HepG2 (cell line): ENCODE measurements at regions of chr14 and their contacts with region 1.

Region 1: DNA sequence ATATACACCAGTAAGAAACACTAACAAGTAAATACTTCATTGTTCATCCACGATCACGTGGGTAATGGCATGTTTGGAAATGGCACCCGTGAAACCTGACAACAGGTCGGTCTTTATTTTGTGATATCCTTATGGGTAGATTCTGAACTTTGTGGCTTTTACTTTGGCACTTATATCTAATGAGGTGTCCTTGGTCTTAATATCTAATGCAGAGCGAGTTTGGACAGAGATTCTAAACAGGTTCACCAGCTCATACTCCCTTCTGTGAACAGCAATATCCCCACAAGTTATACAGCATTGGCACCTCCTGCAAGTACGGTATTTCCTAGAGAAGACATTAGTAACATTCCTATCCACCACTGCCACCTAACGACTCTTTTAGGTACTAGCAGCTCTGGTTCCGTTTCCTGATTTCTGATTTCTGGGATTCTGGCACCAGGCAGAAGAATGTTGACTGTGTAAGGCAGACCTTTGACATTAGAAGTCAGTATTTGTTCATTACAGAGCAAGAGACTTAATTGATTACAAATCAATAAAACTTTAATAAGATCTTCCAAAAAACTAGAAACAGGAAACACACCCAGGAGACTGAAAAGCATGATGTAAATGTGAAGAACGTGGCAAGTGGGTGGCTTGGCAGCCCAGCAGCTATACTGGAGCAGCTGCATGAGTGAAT is 2.4 kb downstream of the ANG start:
- DNase-seq: peak; percentile 84
- ATAC-seq: peak; percentile 52
- H3K4me3 ChIP-seq: peak overlapping the region in 2 of 3 experiments; percentile 2 to 32; a peak in 1 of 6 replicates
- H3K27ac ChIP-seq: peak overlapping the region; percentile 37
- H3K4me1 ChIP-seq: peaks cover 45% of the 10 kb centered on the region
- H3K27me3 ChIP-seq: no peaks in the 10 kb centered on the region; a peak in 1 of 5 replicates
- CTCF ChIP-seq: peak; percentile 93
- EP300 ChIP-seq: no peak
- POLR2A ChIP-seq: peak in 1 of 2 experiments; percentile 25; a peak in 1 of 4 replicates
- RAD21 ChIP-seq: peak; percentile 88

Region 2: DNA sequence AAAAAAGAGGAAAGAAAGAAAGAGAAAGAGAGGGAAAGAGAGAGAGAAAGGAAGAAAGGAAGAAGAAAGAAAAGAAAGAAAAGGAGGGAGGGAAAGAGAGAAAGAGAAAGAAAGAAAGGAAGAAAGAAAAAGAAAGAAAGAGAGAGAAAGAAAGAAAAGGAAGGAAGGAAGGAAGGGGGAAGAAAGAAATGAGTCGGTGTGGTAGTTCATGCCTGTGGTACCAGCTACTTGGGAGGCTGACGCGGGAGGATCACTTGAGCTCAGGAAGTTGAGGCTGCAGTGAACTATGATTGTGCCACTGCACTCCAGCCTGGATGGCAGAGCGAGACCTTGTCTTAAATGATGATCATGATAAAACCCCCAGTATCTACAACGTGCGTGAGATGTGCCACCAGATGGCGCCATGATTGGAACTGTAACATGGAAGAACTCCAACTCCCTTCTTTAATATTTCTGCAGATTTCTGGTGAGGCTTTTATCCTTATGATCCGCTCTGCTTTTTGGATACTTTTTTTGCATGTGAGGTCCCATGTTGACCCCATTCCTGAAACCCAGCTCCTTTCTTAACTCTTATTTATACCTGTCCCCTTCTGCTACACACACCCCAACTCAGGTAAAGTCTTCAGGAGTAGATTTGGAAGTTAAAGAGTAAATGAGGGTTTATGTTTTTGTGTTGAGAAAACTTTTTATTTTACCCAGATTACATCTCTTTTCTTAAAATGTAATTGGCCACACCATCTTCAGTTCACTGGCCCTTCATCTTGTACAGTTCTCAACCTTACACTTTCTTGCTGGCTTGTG is 160.0 kb before region 1 on chr14:
- CTCF ChIA-PET with region 1: no interaction called
- POLR2A ChIA-PET with region 1: no interaction called
- in situ Hi-C with region 1: no loop called
- intact Hi-C with region 1: loop called (anchors 2 kb)
- DNase-seq: peak; percentile 75
- ATAC-seq: peak; percentile 94
- H3K4me3 ChIP-seq: no peak overlapping the region
- H3K27ac ChIP-seq: no peak overlapping the region
- H3K4me1 ChIP-seq: peaks cover 9% of the 10 kb centered on the region; the same call in 1 of the 2 replicates
- H3K27me3 ChIP-seq: no peaks in the 10 kb centered on the region; a peak in 2 of 5 replicates
- CTCF ChIP-seq: peak; percentile 83
- EP300 ChIP-seq: no peak
- POLR2A ChIP-seq: no peak
- RAD21 ChIP-seq: peak; percentile 54; the same call in 1 of the 2 replicates

Region 3: GRCh38 chr14:20632682-20633428 is 58.1 kb before region 1 on chr14:
- CTCF ChIA-PET with region 1: no interaction called
- POLR2A ChIA-PET with region 1: interaction called, 99 read pairs
- in situ Hi-C with region 1: no loop called
- intact Hi-C with region 1: loop called (anchors 1 kb)
- DNase-seq: peak; percentile 93
- ATAC-seq: peak; percentile 79
- H3K4me3 ChIP-seq: peak overlapping the region; percentile 69 to 78 (median 77)
- H3K27ac ChIP-seq: peak overlapping the region; percentile 16
- H3K4me1 ChIP-seq: peaks cover 34% of the 10 kb centered on the region
- H3K27me3 ChIP-seq: no peaks in the 10 kb centered on the region; a peak in 1 of 5 replicates
- CTCF ChIP-seq: no peak
- EP300 ChIP-seq: 0 out of 4 replicates have a peak, but pooled peaks of 1 of the 2 experiments have one; percentile 9
- POLR2A ChIP-seq: no peak
- RAD21 ChIP-seq: no peak

Region 4: DNA sequence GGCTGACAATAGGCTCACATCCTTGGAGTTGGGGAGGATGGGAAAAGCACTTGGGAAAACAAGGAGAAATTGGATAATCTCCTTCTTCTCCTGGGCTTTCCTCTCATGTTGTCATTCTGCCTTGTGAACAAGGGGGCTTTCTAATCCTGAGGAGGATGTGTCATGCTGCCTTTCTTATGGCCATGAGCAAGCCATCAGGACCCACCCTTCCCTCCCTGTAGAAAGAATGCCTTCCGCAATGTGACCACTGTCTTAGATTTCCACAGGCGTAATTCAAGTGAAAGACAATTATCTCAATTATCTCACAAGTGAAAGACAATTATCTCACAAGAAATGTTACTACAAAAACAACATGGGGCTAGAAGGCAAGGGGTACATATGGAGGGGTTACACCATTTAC is 46.5 kb before region 1 on chr14:
- CTCF ChIA-PET with region 1: no interaction called
- POLR2A ChIA-PET with region 1: no interaction called
- in situ Hi-C with region 1: no loop called
- intact Hi-C with region 1: no loop called
- DNase-seq: no peak
- ATAC-seq: no peak
- H3K4me3 ChIP-seq: no peak overlapping the region
- H3K27ac ChIP-seq: no peak overlapping the region
- H3K4me1 ChIP-seq: no peaks in the 10 kb centered on the region
- H3K27me3 ChIP-seq: peaks cover 0 to 6% of the 10 kb centered on the region in 2 experiments; a peak in 1 of 5 replicates
- CTCF ChIP-seq: no peak
- EP300 ChIP-seq: no peak
- POLR2A ChIP-seq: no peak
- RAD21 ChIP-seq: no peak

Region 5: GRCh38 chr14:20657216-20658128 is 33.5 kb before region 1 on chr14:
- CTCF ChIA-PET with region 1: interaction called, 70 read pairs
- POLR2A ChIA-PET with region 1: interaction called, 63 read pairs
- in situ Hi-C with region 1: loop called (anchors 5 kb)
- intact Hi-C with region 1: no loop called
- DNase-seq: peak; percentile 56
- ATAC-seq: peak; percentile 63
- H3K4me3 ChIP-seq: no peak overlapping the region
- H3K27ac ChIP-seq: no peak overlapping the region
- H3K4me1 ChIP-seq: peaks cover 64% of the 10 kb centered on the region
- H3K27me3 ChIP-seq: peaks cover 0 to 23% of the 10 kb centered on the region in 2 experiments; a peak in 3 of 5 replicates
- CTCF ChIP-seq: peak; percentile 62
- EP300 ChIP-seq: no peak
- POLR2A ChIP-seq: no peak
- RAD21 ChIP-seq: 0 out of 2 replicates have a peak, but pooled peaks have one; percentile 40

Region 6: DNA sequence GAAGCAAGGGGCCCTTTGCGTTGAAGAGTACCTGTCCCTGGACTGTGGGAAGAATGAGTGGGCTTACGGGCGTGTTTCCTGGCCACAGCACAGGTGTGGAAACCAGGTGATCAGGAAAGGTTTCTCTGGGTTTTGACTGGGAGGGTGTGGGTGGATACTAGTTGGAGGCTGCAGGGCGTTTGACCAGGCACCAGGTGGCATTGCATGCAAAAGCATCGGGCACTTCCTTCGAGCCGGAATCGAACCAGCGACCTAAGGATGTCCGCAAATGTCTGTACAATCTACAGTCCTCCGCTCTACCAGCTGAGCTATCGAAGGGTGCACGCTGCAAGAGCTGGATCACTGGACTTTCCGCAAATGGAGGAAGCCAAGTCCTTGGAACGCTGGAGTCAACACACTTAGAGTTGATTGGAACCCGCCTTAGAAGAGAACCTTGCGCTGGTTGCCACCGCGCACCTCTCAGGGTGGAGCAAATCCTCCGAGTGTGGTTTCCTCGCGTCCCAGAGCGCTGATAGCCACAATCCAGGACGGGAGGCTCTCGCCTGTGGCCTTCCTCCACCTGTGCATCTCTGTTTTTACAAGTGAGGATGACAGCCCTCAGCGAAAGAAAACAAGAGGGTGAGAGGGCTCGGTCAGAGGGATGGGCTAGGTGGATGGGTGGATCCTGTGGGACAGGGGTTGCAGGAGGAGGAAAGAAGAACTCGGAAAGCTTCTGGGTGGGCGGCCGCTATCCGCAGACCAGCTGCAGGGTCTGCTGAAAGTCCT is 27.8 kb before region 1 on chr14:
- CTCF ChIA-PET with region 1: interaction called, 70 read pairs
- POLR2A ChIA-PET with region 1: interaction called, 141 read pairs
- in situ Hi-C with region 1: loop called (anchors 5 kb)
- intact Hi-C with region 1: loop called (anchors 1 kb)
- DNase-seq: peak; percentile 76
- ATAC-seq: peak; percentile 64
- H3K4me3 ChIP-seq: peak overlapping the region in 1 of 3 experiments; percentile 50; a peak in 1 of 6 replicates
- H3K27ac ChIP-seq: no peak overlapping the region
- H3K4me1 ChIP-seq: peaks cover 84% of the 10 kb centered on the region
- H3K27me3 ChIP-seq: no peaks in the 10 kb centered on the region
- CTCF ChIP-seq: peak; percentile 88
- EP300 ChIP-seq: no peak
- POLR2A ChIP-seq: no peak
- RAD21 ChIP-seq: peak; percentile 91

Region 7: DNA sequence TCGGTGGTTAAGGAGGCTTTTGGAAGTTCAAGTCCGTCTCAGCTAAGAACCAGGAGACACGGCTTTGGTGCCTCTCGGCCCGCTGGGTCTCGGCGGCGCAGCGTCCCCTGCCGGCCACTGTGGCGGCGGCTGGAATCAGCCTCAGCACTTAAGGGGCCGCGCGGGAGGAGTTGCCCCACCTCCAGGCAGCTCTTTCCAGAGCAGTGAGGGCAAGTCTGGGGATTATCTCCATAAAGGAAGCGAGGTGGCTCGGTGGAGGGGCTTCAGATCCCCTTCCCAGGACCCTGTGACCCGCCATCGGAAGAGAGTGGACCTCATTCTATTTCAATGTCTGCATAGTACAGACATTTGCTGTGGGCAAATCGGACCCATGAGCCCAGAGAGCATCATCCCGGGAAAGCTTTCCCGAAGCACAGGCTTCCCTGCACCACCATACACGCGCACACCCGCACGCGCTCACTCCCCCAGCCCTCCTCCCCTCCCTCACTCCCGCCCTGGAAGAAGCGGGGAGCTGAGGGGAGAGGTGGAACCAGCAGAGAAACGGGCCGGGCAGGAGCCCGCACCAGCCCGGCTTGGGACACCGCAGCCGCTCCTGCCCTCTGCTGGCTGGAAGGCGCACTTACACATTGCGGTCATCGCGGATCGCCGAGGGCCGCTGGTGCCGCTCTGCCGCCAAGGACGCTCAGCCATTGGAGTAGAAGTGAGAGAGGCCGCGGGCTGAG is 280.2 kb after region 1 on chr14:
- CTCF ChIA-PET with region 1: no interaction called
- POLR2A ChIA-PET with region 1: interaction called, 3 read pairs
- in situ Hi-C with region 1: no loop called
- intact Hi-C with region 1: loop called (anchors 2 kb)
- DNase-seq: peak; percentile 80
- ATAC-seq: peak; percentile 93
- H3K4me3 ChIP-seq: peak overlapping the region; percentile 54 to 80 (median 80)
- H3K27ac ChIP-seq: no peak overlapping the region
- H3K4me1 ChIP-seq: peaks cover 36% of the 10 kb centered on the region
- H3K27me3 ChIP-seq: peaks cover 0 to 23% of the 10 kb centered on the region in 2 experiments; a peak in 3 of 5 replicates
- CTCF ChIP-seq: peak; percentile 97
- EP300 ChIP-seq: 0 out of 4 replicates have a peak, but pooled peaks of 1 of the 2 experiments have one; percentile 9
- POLR2A ChIP-seq: 0 out of 4 replicates have a peak, but pooled peaks of 1 of the 2 experiments have one; percentile 0
- RAD21 ChIP-seq: peak; percentile 81